ENCODE measurements at regions of chr3 and their contacts with region 1.

Region 1: DNA sequence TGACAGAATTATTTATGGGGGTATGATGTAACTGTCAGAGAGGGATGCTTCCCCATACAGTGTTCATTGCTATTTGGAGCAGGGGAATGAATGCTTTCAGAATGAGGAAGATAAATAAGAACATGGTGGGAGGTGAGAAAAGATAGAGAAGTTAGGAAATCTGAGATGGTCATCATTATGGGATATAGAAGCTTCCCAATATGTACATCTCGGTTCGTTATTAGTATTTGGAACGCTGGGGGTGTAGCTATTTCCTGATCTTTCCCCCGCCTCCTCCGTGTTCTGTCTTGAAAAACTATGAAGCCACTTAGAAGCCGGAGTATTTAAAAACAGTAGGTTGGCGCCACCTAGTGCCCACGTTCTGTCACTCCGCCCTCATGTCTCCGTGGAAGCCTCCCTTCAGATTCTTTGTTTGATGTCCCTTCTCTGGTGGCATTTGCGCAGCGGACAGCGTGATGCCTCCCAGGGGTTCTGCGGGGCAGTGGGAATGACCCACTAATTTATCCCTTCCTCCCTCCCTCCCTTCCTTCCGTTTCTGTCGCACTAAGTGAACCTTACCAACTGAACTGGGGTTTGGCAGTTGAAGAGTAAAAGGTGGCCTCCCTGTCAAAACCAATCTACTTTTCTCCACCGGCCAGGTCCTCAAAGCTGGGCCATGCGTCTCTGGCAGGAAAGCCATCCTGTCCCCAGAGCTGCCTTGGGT is 184.5 kb downstream of the FEZF2 start:
- DNase-seq: peak; percentile 70 to 88
- ATAC-seq: peak; percentile 79 to 93 (median 82)
- H3K4me3 ChIP-seq: peak overlapping the region; percentile 52
- H3K27ac ChIP-seq: no peak overlapping the region
- H3K4me1 ChIP-seq: peaks cover 15% of the 10 kb centered on the region
- H3K27me3 ChIP-seq: no peaks in the 10 kb centered on the region
- CTCF ChIP-seq: peak; percentile 92

Region 2: GRCh38 chr3:61947456-61947855 is 241.4 kb before region 1 on chr3:
- intact Hi-C with region 1: loop called in 1 of 2 experiments (anchors 10 kb)
- DNase-seq: peak in 1 of 2 donors; percentile 25
- ATAC-seq: no peak
- H3K4me3 ChIP-seq: no peak overlapping the region
- H3K27ac ChIP-seq: no peak overlapping the region
- H3K4me1 ChIP-seq: peaks cover 44% of the 10 kb centered on the region
- H3K27me3 ChIP-seq: no peaks in the 10 kb centered on the region
- CTCF ChIP-seq: no peak

Region 3: DNA sequence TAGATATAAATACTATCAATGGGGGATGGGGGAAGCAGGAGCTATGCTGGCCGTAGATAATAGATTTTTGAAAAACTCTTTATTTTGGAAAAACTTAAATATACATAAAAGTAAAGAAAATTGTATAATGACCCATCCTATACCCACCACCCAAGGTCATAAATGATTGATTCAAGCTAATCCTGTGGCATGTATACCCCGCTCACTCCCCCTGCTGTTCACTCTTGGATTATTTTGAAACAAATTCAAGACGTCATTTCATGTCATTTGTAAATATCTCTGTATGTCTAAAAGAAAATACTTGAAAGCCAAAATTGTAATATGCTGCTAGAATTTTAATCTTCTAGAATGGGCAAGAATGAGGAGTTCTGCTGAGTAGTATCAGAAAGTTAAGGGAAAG is 57.2 kb before region 1 on chr3:
- intact Hi-C with region 1: no loop called
- DNase-seq: no peak
- ATAC-seq: no peak
- H3K4me3 ChIP-seq: no peak overlapping the region
- H3K27ac ChIP-seq: peak overlapping the region; percentile 39
- H3K4me1 ChIP-seq: peaks cover 51% of the 10 kb centered on the region
- H3K27me3 ChIP-seq: no peaks in the 10 kb centered on the region
- CTCF ChIP-seq: peak; percentile 36

Region 4: DNA sequence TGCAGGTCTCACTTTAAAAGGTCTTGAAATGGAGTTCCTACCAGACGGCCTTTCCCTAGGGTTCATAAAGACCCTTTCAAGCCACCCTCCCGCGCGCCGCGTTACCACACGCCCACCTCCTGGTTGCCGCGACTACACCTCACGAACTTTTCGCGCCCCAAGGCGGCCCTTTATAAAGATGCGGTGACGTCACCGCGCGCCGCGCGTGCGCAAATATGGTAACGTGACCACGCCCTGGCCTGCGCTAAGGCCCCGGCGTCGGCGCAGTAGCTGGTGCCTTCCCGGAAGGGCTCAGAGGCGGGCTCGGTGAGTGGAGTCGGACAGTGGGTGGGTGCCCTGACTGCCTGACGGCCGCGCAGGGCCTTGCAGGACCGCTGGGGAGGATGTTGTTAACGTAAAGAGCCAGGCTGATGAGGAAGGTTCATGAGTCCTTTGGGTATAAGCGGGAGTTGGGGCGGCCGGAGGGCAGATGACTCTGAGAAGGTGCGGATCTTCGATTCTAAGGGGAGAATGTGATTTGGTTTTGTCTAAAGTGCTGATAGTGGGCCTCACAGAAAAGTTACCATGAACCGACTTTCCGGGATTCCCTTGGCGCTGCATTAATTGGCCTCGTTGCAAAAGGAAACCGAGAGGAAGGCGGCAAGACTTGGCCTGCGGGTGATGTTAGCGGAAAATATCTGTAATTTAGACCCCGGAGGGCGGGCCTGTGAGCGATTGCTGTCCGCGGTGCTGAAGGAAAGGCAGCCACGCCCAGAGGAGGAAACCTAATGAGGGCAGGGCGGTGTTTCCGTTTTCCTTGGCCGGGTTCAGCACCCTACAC is 130.1 kb after region 1 on chr3:
- intact Hi-C with region 1: no loop called
- DNase-seq: peak; percentile 79 to 87
- ATAC-seq: peak; percentile 64 to 89 (median 80)
- H3K4me3 ChIP-seq: peak overlapping the region; percentile 62
- H3K27ac ChIP-seq: no peak overlapping the region
- H3K4me1 ChIP-seq: no peaks in the 10 kb centered on the region
- H3K27me3 ChIP-seq: peaks cover 0 to 32% (median 0%) of the 10 kb centered on the region in 3 donors
- CTCF ChIP-seq: no peak

Region 5: GRCh38 chr3:63103843-63104242 is 915.0 kb after region 1 on chr3:
- intact Hi-C with region 1: no loop called
- DNase-seq: no peak
- ATAC-seq: no peak
- H3K4me3 ChIP-seq: no peak overlapping the region
- H3K27ac ChIP-seq: no peak overlapping the region
- H3K4me1 ChIP-seq: no peaks in the 10 kb centered on the region
- H3K27me3 ChIP-seq: no peaks in the 10 kb centered on the region
- CTCF ChIP-seq: no peak

Measured in psoas muscle (tissue), 8 donors.